ENCODE measurements at regions of chr2 and their contacts with region 1.

Region 1: DNA sequence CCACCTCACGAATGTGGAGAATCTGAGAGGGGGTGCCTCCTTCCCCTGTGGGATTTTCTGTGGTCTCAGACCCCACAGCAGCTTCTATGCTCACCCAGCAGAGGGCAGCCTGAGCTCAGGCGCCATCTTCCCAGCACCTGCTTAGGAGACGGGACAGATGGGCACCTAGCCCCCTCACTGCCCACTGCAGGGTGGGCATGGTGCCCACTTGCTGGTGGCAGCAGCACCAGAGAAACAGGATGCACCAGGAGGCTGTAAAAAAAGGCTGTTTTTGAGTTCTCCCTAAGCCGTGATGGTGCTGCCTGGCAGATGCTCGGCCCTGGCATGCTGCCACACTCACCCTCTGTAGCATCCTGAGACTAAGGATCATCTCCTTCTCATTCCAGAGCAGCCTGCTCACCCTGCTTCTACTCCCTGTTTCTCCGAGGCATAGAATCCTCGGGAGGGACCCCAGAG is 19.1 kb upstream of the SLC20A1 start:
- DNase-seq: peak; percentile 52 to 78 (median 64)
- ATAC-seq: peak; percentile 88
- H3K4me3 ChIP-seq: no peak overlapping the region
- H3K27ac ChIP-seq: no peak overlapping the region
- H3K4me1 ChIP-seq: peaks cover 18 to 52% of the 10 kb centered on the region in 2 experiments
- H3K27me3 ChIP-seq: no peaks in the 10 kb centered on the region
- CTCF ChIP-seq: peak; percentile 90 to 91 (median 91)
- EP300 ChIP-seq: no peak
- POLR2A ChIP-seq: no peak
- RAD21 ChIP-seq: peak; percentile 97 to 99

Region 2: DNA sequence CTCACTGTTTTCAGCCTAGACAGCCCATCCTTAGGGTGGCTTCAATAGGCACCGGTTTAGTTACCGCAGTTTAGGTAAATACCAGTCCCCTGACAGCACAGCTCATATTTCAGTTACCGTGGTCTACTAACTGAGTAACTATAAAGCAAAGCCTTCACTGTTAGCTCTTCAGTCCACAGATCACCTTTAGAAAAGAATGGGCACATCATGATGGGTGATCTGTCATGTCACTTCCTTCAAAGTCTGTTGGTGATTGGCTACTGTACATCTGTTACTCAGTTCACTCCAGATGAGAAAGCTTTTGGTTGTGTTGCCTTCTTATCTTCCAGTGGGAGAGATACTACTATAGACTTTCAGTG is 40.1 kb after region 1 on chr2:
- CTCF ChIA-PET with region 1: no interaction called
- POLR2A ChIA-PET with region 1: no interaction called
- in situ Hi-C with region 1: no loop called
- intact Hi-C with region 1: loop called (anchors 2 kb)
- DNase-seq: peak; percentile 68 to 81 (median 76)
- ATAC-seq: peak; percentile 67
- H3K4me3 ChIP-seq: no peak overlapping the region
- H3K27ac ChIP-seq: peak overlapping the region; percentile 70
- H3K4me1 ChIP-seq: peaks cover 6 to 55% of the 10 kb centered on the region in 2 experiments; a peak in 4 of 5 replicates
- H3K27me3 ChIP-seq: no peaks in the 10 kb centered on the region
- CTCF ChIP-seq: no peak
- EP300 ChIP-seq: peak; percentile 85
- POLR2A ChIP-seq: no peak
- RAD21 ChIP-seq: no peak

Region 3: GRCh38 chr2:112692496-112692911 is 65.9 kb after region 1 on chr2:
- CTCF ChIA-PET with region 1: interaction called, 3 read pairs
- POLR2A ChIA-PET with region 1: no interaction called
- in situ Hi-C with region 1: no loop called
- intact Hi-C with region 1: loop called (anchors 2 kb)
- DNase-seq: peak; percentile 84 to 97 (median 87)
- ATAC-seq: peak; percentile 95
- H3K4me3 ChIP-seq: no peak overlapping the region
- H3K27ac ChIP-seq: peak overlapping the region; percentile 70
- H3K4me1 ChIP-seq: peaks cover 38 to 40% of the 10 kb centered on the region in 2 experiments
- H3K27me3 ChIP-seq: no peaks in the 10 kb centered on the region
- CTCF ChIP-seq: 0 out of 6 replicates have a peak, but pooled peaks of 1 of the 3 experiments have one; percentile 4
- EP300 ChIP-seq: peak; percentile 68
- POLR2A ChIP-seq: no peak
- RAD21 ChIP-seq: peak in 1 of 2 experiments; percentile 38; a peak in 2 of 4 replicates

Region 4: DNA sequence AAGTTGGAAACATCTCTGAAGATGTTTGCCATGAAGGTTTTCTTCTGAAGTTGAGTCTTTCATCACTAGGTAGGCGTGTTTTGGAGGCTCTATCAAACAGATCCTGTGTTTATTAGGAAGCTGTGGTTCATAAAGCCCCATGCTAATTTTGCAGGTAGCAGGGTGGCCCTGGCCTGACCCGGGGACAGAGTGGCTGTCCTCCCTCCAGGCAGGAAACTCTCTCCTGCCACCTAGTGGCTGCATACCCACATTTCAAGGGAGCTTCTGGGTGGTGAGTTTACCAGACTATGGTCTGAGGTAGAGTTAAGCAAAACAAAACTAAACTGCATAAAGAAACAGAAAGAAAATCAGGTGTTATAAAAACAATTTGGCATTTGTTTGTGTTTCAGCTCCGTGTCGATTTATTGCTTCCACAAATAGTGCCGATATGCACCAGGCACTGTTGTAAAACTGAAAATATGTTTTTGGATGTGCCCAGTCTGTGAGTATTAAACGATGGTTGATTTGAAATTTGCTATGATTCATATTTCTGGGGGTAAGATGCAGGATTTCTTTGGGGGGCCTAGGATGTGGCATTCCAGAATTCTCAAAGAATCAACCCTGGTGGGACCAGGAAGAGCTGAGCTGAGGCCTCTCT is 258.4 kb after region 1 on chr2:
- CTCF ChIA-PET with region 1: interaction called, 3 read pairs
- POLR2A ChIA-PET with region 1: no interaction called
- in situ Hi-C with region 1: loop called (anchors 25 kb)
- intact Hi-C with region 1: no loop called
- DNase-seq: peak; percentile 78 to 92 (median 89)
- ATAC-seq: peak; percentile 97
- H3K4me3 ChIP-seq: no peak overlapping the region
- H3K27ac ChIP-seq: no peak overlapping the region
- H3K4me1 ChIP-seq: peaks cover 0 to 12% of the 10 kb centered on the region in 2 experiments; a peak in 3 of 5 replicates
- H3K27me3 ChIP-seq: no peaks in the 10 kb centered on the region
- CTCF ChIP-seq: peak; percentile 81 to 93 (median 92)
- EP300 ChIP-seq: no peak
- POLR2A ChIP-seq: no peak
- RAD21 ChIP-seq: peak; percentile 97